ENCODE measurements at regions of chr10 and their contacts with region 1.

Region 1: DNA sequence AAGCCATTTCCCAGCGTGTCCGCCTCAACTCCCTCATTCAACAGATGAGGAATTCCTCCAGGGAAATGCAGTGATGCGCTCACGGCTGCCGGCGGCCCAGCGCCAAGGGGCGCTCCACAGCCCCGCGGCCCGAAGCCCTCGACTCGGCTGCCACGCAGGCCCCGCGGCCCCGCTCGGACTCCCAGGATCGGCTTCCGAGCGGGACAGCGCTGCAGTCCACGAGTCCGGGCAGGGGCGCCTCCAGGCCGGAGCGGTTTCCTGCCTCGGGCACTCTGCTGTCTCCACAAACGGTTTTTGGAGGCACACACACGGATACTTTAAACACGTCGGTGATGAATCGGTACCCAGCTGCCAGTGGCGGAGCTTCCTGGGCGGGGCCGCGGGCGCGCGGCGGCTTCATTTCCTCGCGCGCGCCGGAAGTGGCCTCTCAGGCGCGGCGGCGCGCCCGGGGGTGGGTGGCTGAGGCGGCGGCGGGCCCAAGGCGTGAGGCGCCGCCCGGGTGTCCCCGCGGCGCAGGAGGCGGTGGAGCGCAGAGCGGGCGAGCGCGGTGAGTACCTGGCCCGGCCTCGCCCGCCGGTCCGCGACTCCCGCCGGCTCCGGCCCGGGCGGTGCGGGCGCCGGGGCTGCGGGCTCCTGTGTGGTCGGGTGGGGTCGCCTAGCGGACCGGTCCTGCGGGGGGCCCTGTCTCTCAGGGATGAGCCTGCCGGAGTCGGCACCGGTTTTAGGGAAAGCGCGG is at the start of gene CSGALNACT2:
- DNase-seq: peak; percentile 92
- H3K4me3 Mint-ChIP-seq: peak within 1 kb of the TSS; percentile 100
- H3K27ac Mint-ChIP-seq: peak within 1 kb of the TSS; percentile 100
- H3K4me1 Mint-ChIP-seq: peaks cover 48% of the 10 kb centered on the region
- H3K27me3 Mint-ChIP-seq: no peaks in the 10 kb centered on the region
- total RNA-seq, gene CSGALNACT2: 30.2 to 32.3 TPM

Region 2: GRCh38 chr10:42782446-42783180 is 355.6 kb before region 1 on chr10 and contains the start of gene BMS1:
- CTCF ChIA-PET with region 1: no interaction called
- POLR2A ChIA-PET with region 1: interaction called, 3 read pairs
- intact Hi-C with region 1: loop called (anchors 5 kb)
- DNase-seq: peak; percentile 94
- H3K4me3 Mint-ChIP-seq: peak within 1 kb of the TSS; percentile 85
- H3K27ac Mint-ChIP-seq: peak within 1 kb of the TSS; percentile 90
- H3K4me1 Mint-ChIP-seq: peaks cover 17% of the 10 kb centered on the region
- H3K27me3 Mint-ChIP-seq: peaks cover 1% of the 10 kb centered on the region
- total RNA-seq, gene BMS1: 25.5 to 25.9 TPM

Region 3: GRCh38 chr10:43160046-43160918 is 22.1 kb after region 1 on chr10:
- CTCF ChIA-PET with region 1: interaction called, 8 read pairs
- POLR2A ChIA-PET with region 1: interaction called, 26 read pairs
- intact Hi-C with region 1: loop called (anchors 1 kb)
- DNase-seq: peak; percentile 66
- H3K4me3 Mint-ChIP-seq: peak overlapping the region; percentile 20
- H3K27ac Mint-ChIP-seq: peak overlapping the region; percentile 89
- H3K4me1 Mint-ChIP-seq: peaks cover 60% of the 10 kb centered on the region
- H3K27me3 Mint-ChIP-seq: no peaks in the 10 kb centered on the region

Region 4: DNA sequence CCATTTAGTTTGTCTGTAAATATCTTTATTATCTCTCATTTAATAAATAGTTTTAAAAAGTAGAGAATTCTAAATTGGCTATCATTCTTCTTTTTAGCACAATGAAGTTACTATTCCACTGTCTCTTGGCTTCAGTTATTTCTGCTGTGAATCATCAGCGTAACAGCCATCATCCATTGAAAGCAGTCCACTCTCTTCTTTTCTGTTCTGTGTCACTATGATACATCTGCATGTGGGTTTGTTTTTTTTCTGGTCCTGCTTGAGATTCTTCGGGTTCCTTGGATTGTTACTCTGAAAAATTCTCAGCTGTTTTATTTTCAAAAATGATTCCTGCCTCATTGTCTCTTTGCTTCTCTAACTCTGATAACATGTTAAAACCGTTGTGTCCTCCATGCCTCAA is 52.6 kb after region 1 on chr10:
- CTCF ChIA-PET with region 1: no interaction called
- POLR2A ChIA-PET with region 1: no interaction called
- intact Hi-C with region 1: no loop called
- DNase-seq: no peak
- H3K4me3 Mint-ChIP-seq: no peak overlapping the region
- H3K27ac Mint-ChIP-seq: no peak overlapping the region
- H3K4me1 Mint-ChIP-seq: no peaks in the 10 kb centered on the region
- H3K27me3 Mint-ChIP-seq: no peaks in the 10 kb centered on the region

Region 5: GRCh38 chr10:43299579-43299978 is 161.4 kb after region 1 on chr10:
- CTCF ChIA-PET with region 1: no interaction called
- POLR2A ChIA-PET with region 1: no interaction called
- intact Hi-C with region 1: loop called (anchors 5 kb)
- DNase-seq: peak; percentile 84
- H3K4me3 Mint-ChIP-seq: no peak overlapping the region
- H3K27ac Mint-ChIP-seq: peak overlapping the region; percentile 93
- H3K4me1 Mint-ChIP-seq: peaks cover 56% of the 10 kb centered on the region
- H3K27me3 Mint-ChIP-seq: no peaks in the 10 kb centered on the region

Region 6: DNA sequence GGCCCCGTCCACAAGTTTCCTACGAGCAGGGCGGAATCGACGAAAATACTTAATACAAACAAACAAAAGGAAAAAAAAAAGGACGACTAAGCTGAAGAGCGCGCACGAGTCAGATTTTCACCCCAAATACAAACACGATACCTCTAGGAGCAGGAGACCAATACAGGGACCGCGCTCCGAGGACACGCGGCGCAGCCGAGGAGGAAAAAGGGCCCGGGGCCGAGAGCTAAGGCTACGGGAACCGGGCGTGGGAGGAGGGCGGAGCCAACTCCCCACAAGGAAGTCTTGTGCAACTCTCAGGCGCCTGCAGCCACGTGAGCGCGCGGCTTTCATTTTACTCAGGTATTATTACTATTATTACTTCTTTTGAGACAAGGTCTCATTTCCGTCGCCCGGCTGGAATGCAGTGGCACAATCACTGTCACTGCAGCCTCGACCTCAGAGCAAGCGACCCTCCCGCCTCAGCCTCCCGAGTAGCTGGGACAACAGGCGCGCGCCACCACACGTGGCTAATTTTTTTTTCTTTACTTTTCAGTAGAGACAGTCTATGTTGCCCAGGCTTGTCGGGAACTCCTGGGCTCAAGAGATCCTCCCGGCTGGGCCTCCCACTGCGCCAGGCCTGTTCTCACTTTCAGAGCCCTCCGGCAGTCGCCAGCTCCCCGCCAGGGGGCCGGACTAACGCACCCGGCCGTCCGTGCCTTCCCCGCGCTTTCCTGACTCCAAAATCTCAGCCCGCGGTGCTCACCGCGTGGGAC is 269.6 kb after region 1 on chr10:
- CTCF ChIA-PET with region 1: no interaction called
- POLR2A ChIA-PET with region 1: interaction called, 4 read pairs
- intact Hi-C with region 1: loop called (anchors 2 kb)
- DNase-seq: peak; percentile 95
- H3K4me3 Mint-ChIP-seq: peak overlapping the region; percentile 97
- H3K27ac Mint-ChIP-seq: peak overlapping the region; percentile 100
- H3K4me1 Mint-ChIP-seq: peaks cover 20% of the 10 kb centered on the region
- H3K27me3 Mint-ChIP-seq: no peaks in the 10 kb centered on the region

Region 7: DNA sequence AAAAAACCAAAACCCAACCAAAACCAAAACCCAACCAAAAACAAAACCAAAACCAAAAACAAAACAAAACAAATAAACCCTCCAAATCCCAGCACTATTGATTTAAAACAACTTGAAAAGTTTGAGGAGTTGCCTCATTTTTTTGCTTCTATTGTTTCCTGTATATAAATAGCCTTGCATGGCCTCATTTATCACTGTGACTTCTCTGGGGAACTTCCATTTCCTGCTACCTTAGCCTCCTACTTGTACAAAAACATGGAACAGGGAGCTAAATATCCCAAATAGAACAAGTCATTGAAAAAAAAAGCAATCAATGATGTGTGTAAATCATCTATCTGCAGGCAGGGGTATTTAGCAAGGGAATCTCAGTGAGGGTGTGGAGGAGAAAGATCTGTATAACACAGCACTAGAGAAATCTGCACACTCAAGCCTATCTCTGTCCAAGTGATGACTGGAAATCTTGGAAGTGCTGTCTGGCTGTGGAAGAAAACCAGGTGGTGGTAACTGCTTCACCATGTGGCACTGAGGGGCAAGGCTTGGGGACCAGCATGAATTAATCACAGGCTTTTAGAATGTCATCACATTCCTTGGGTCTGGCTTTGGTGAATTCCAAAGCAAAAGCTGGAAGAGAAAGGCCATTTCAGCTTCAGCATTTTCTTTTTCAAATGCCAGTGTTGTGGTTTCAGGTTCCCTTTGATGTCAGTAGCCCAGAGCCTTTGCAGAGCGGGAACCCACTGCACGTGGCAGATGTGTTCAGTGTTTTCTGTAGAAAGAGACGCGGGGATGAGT is 860.0 kb after region 1 on chr10:
- CTCF ChIA-PET with region 1: no interaction called
- POLR2A ChIA-PET with region 1: no interaction called
- intact Hi-C with region 1: no loop called
- DNase-seq: no peak
- H3K4me3 Mint-ChIP-seq: no peak overlapping the region
- H3K27ac Mint-ChIP-seq: no peak overlapping the region
- H3K4me1 Mint-ChIP-seq: no peaks in the 10 kb centered on the region
- H3K27me3 Mint-ChIP-seq: peaks cover 20% of the 10 kb centered on the region